ENCODE measurements at regions of chr15 and their contacts with region 1.

Region 1: GRCh38 chr15:36924034-36924433 is 176.3 kb downstream of the MEIS2 start:
- DNase-seq: no peak
- ATAC-seq: no peak
- H3K4me3 ChIP-seq: no peak overlapping the region
- H3K27ac ChIP-seq: no peak overlapping the region
- H3K4me1 ChIP-seq: peaks cover 0 to 49% (median 24%) of the 10 kb centered on the region in 9 donors
- H3K27me3 ChIP-seq: no peaks in the 10 kb centered on the region
- CTCF ChIP-seq: no peak

Region 2: DNA sequence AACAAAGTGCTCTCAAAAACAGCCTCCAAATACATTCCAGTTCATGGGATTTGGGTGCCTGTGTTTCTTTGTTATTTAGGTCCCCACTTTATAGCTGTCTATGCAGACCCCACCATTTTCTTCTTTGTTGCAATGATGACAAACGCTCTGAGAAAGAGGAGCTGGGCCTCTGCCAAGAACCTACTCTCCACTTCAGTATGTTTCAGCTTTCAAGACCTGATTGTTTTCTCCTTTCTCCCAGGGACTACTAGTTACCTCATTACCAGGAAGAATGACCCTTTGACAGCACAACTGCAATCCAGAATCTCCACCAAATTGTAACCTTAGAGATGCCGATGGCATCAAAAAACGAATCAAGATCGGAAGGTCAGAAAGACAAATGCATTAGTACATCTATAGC is 60.5 kb before region 1 on chr15:
- intact Hi-C with region 1: no loop called
- DNase-seq: no peak
- ATAC-seq: no peak
- H3K4me3 ChIP-seq: no peak overlapping the region
- H3K27ac ChIP-seq: no peak overlapping the region
- H3K4me1 ChIP-seq: no peaks in the 10 kb centered on the region
- H3K27me3 ChIP-seq: no peaks in the 10 kb centered on the region
- CTCF ChIP-seq: no peak

Region 3: GRCh38 chr15:37053070-37053653 is 129.1 kb after region 1 on chr15:
- intact Hi-C with region 1: loop called in 1 of 10 experiments (anchors 5 kb)
- DNase-seq: no peak
- ATAC-seq: no peak
- H3K4me3 ChIP-seq: no peak overlapping the region
- H3K27ac ChIP-seq: no peak overlapping the region
- H3K4me1 ChIP-seq: peaks cover 0 to 47% (median 29%) of the 10 kb centered on the region in 9 donors
- H3K27me3 ChIP-seq: no peaks in the 10 kb centered on the region
- CTCF ChIP-seq: no peak

Region 4: DNA sequence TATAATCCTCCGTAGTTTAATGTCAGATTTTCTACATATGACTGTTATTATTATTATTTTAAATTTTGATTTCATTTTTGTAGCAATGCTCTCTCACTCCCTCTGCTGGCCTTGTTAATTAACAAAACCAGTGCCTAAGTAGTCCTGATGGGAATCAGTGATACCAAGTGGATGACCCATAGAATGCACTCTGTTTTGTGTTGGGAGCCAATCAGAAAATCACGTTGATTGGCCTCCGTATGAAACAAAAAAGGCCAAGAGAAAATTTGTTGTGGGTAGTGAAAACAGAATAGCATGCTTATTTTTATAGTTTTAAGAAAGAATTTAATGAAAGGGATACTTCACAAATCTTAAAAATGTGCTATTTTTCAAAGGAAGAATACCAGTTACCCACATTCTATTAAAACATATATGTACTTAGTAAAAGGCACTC is 210.7 kb after region 1 on chr15:
- intact Hi-C with region 1: no loop called
- DNase-seq: no peak
- ATAC-seq: peak in 2 of 8 donors; percentile 65 to 71
- H3K4me3 ChIP-seq: no peak overlapping the region
- H3K27ac ChIP-seq: no peak overlapping the region
- H3K4me1 ChIP-seq: peaks cover 0 to 5% (median 0%) of the 10 kb centered on the region in 9 donors
- H3K27me3 ChIP-seq: peaks cover 0 to 3% (median 0%) of the 10 kb centered on the region in 7 donors
- CTCF ChIP-seq: peak; percentile 7 to 80 (median 68)

Measured in heart right ventricle (tissue), 16 donors.